Panc1 (cell line): ENCODE measurements at regions of chr1 and their contacts with region 1.

Region 1: DNA sequence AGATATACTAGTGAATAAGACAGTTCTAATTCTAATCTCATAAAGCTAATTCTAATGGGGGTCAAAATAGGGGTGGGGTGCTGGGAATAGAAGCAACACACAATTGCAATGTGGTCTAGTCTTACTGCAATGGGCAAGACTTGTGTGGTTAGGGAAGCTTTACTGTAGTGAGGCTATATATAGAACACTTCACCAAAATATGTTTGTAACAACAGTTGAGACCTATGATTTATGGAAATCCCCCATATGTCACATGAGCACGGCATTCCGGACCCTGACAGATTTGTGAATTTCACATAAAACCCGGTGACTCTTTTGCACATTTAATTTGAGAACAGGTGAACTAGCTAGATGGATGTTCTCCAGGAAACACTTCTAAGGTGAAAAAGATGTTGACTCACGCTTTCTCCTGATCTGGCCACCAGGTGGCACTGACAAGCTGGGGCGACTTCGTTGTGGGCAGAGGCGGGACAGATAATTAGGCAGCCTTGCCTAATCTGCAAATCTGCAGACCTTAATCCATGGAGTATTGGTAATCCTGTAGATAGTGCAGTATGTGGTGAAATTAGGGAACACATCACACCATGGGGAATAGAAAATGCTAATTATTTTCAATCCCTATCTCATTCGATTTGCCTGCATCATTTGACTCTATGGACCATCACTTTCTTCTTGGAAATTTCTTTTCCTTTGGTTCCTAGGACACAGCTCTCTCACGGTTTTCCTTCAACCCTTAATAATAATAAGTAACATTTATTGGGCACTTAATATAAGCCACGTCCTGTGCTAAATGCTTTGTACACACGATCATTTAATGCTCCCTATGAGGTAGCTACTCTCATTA is 37.7 kb downstream of the KIAA0040 start:
- DNase-seq: peak; percentile 52
- ATAC-seq: peak; percentile 68; the same call in 1 of the 2 replicates
- H3K4me3 ChIP-seq: no peak overlapping the region
- H3K27ac ChIP-seq: no peak overlapping the region
- H3K4me1 ChIP-seq: no peaks in the 10 kb centered on the region
- H3K27me3 ChIP-seq: peaks cover 11% of the 10 kb centered on the region
- CTCF ChIP-seq: peak; percentile 90

Region 2: GRCh38 chr1:175250027-175250426 is 95.2 kb after region 1 on chr1:
- CTCF ChIA-PET with region 1: no interaction called
- POLR2A ChIA-PET with region 1: no interaction called
- in situ Hi-C with region 1: no loop called
- intact Hi-C with region 1: no loop called
- DNase-seq: no peak
- ATAC-seq: no peak
- H3K4me3 ChIP-seq: no peak overlapping the region
- H3K27ac ChIP-seq: no peak overlapping the region
- H3K4me1 ChIP-seq: no peaks in the 10 kb centered on the region
- H3K27me3 ChIP-seq: no peaks in the 10 kb centered on the region
- CTCF ChIP-seq: no peak

Region 3: GRCh38 chr1:175319418-175320230 is 164.8 kb after region 1 on chr1:
- CTCF ChIA-PET with region 1: interaction called, 19 read pairs
- POLR2A ChIA-PET with region 1: no interaction called
- in situ Hi-C with region 1: no loop called
- intact Hi-C with region 1: loop called (anchors 1 kb)
- DNase-seq: peak; percentile 39
- ATAC-seq: peak; percentile 93
- H3K4me3 ChIP-seq: no peak overlapping the region
- H3K27ac ChIP-seq: no peak overlapping the region
- H3K4me1 ChIP-seq: no peaks in the 10 kb centered on the region
- H3K27me3 ChIP-seq: no peaks in the 10 kb centered on the region
- CTCF ChIP-seq: peak; percentile 82

Region 4: DNA sequence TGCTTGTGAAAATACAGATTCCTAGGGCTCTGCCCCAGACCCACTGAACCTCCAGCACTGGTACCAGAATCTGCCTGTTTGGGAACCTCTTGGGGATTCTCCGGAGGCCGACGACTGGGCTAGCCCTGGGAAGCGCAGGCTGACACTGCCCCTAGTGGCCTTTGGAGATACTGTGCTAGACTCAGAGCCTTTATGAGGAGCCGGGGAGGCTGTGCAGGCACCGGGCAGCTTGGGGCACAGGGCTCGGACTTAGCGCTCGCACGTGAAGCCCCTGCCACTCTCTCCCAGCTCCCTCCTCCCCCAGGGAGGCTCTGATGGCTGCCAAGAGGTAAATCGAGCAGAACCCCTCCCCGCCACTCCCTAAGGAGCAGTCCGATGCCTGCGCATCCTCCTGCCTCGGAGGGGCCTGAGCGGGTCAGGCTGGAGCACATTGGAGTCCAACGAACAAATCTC is 733.2 kb after region 1 on chr1:
- CTCF ChIA-PET with region 1: interaction called, 6 read pairs
- POLR2A ChIA-PET with region 1: no interaction called
- in situ Hi-C with region 1: no loop called
- intact Hi-C with region 1: loop called (anchors 10 kb)
- DNase-seq: peak; percentile 12
- ATAC-seq: peak; percentile 98
- H3K4me3 ChIP-seq: no peak overlapping the region
- H3K27ac ChIP-seq: no peak overlapping the region
- H3K4me1 ChIP-seq: no peaks in the 10 kb centered on the region
- H3K27me3 ChIP-seq: no peaks in the 10 kb centered on the region
- CTCF ChIP-seq: peak; percentile 91

Region 5: DNA sequence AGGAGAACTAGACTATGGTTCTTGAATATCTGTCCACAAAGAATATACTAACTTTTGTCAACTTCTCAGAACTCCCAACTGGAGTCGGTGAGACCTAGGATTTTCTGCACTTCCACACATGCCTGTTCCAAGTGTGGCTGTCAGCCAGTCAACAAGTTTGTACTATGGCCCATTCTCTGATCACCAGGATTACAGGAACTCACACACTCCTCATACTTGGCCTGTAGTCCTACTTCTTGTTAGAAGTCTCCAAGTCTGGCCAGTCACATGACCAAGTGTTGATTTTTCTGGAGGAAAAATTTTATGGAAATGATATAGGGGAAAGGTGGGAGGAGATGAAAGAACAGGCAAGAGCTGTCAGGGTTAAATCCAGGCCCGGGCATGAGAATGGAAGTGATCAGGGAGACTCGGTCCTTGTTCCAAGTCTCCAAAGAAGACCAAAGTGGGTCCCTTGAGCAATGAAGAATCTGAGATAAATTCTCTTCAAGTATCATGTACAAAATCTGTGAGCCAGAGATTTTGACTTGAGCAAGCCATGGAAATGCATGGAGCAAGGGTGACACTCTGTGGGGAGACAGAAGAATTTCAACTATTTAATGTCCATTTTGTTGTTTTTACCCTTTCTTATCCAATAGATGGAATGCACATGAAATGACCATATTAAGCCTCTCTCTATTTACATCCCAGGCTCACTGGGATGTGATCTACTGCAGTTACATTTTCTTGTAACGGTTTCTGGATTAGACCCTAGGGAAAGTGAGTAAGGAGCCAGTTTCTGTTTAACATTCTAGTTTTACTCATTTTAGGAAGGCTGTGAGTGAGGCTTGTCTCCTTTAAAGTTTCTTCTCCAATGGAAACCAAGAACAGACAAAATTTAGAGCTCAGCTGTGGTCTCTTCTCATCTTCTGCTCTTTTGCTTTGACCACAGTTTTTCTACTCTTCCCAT is 1688.8 kb after region 1 on chr1:
- CTCF ChIA-PET with region 1: no interaction called
- POLR2A ChIA-PET with region 1: no interaction called
- in situ Hi-C with region 1: no loop called
- intact Hi-C with region 1: loop called (anchors 10 kb)
- DNase-seq: peak; percentile 1
- ATAC-seq: no peak
- H3K4me3 ChIP-seq: no peak overlapping the region
- H3K27ac ChIP-seq: no peak overlapping the region
- H3K4me1 ChIP-seq: no peaks in the 10 kb centered on the region
- H3K27me3 ChIP-seq: 0 out of 2 replicates have a peak, but pooled peaks cover 6% of the 10 kb centered on the region
- CTCF ChIP-seq: peak; percentile 54